Heart left ventricle (tissue), 16 donors: ENCODE measurements at regions of chr5 and their contacts with region 1.

Region 1: DNA sequence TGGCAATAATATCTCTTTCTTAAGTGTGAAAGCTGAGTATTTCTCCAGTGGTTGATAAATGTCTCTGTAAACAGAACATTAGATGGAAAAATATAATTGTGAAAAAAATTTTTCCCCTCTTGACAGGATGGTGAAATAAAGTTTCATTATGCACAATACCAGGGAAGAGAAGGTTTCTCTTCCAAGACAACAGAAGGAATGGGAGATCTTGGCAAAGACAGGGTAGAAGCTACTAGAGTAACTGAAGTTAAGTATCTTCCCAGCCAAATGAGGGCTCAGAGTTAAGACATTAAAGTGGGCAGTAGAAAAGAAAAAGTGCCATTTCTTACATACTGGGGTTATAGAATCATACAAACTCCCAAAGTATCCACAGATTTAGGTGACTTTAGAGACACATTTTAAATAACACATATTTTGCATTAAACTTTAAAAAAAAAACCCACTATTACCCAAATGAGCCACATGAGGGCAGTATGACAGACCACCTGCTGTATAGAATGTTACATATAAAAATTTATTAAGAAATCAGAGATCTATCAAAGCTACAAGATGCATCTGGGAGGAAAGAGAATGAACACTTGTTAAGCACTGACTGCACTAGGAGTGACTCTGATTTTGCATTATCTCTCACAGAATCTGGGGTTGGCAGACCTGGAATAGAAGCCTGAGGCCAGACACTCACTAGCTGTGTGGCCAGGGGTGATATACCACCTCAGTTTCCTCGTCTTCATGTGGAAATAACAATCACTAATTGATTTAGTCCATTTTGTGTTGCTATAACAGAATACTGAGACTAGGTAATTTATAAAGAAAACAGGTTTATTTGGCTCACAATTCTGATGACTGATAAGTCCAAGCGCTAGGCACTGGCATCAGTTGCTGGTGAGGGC is 98.5 kb downstream of the ARSB start:
- DNase-seq: no peak
- ATAC-seq: no peak
- H3K4me3 ChIP-seq: no peak overlapping the region
- H3K27ac ChIP-seq: no peak overlapping the region
- H3K4me1 ChIP-seq: peaks cover 0 to 17% (median 3%) of the 10 kb centered on the region in 12 donors
- H3K27me3 ChIP-seq: no peaks in the 10 kb centered on the region
- CTCF ChIP-seq: peak; percentile 39 to 71 (median 51)
- POLR2A ChIP-seq: no peak

Region 2: GRCh38 chr5:78829811-78830527 is 56.6 kb before region 1 on chr5:
- intact Hi-C with region 1: loop called in 3 of 10 experiments (anchors 10 kb)
- DNase-seq: peak; percentile 63 to 82 (median 75)
- ATAC-seq: peak; percentile 74 to 96 (median 94)
- H3K4me3 ChIP-seq: no peak overlapping the region
- H3K27ac ChIP-seq: peak overlapping the region in 7 of 12 donors; percentile 0 to 51 (median 25)
- H3K4me1 ChIP-seq: peaks cover 0 to 30% (median 12%) of the 10 kb centered on the region in 12 donors
- H3K27me3 ChIP-seq: no peaks in the 10 kb centered on the region
- CTCF ChIP-seq: no peak
- POLR2A ChIP-seq: no peak

Region 3: GRCh38 chr5:78964887-78965286 is 78.3 kb after region 1 on chr5:
- intact Hi-C with region 1: loop called in 1 of 10 experiments (anchors 5 kb)
- DNase-seq: no peak
- ATAC-seq: peak; percentile 71 to 86 (median 81)
- H3K4me3 ChIP-seq: no peak overlapping the region
- H3K27ac ChIP-seq: no peak overlapping the region
- H3K4me1 ChIP-seq: no peaks in the 10 kb centered on the region
- H3K27me3 ChIP-seq: no peaks in the 10 kb centered on the region
- CTCF ChIP-seq: peak in 11 of 12 donors; percentile 36 to 69 (median 61)
- POLR2A ChIP-seq: no peak